ENCODE measurements at regions of chr5 and their contacts with region 1.

Region 1: GRCh38 chr5:32709781-32710549 is 1.2 kb upstream of the NPR3 start:
- DNase-seq: peak in 9 of 10 donors; percentile 47 to 93 (median 60)

Region 2: GRCh38 chr5:32436553-32437242 is 273.3 kb before region 1 on chr5:
- intact Hi-C with region 1: no loop called
- DNase-seq: no peak

Region 3: DNA sequence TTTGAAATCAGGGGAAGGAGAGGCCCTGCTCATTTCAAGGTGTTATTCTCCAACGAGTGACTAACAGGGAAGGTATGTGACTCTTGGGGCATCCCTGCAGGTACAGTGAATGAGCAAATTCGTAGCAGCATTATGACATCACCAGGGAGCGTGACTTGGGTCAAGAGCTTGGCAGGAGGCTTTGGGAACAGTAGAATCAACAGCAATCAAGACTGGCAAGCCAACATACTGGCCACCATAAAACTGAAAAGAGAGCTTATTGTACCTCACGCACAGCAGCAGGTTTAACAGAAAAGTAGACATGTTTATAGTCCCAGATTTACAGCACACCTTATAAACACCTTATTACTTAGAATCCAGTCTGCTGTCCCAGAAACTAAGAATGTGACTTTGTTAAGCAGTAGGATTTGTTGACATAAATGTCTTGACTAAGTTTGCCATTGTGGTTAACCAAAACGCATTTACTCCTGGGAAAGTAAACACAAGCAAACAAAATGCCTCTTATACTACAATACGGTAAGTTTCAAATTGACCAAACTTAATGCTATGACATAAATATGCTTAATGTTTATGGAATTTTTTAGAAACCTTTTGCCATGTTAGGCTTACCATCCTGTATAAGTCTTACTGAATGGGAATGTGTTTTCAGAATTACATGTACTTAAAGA is 298.9 kb after region 1 on chr5:
- intact Hi-C with region 1: no loop called
- DNase-seq: no peak

Region 4: DNA sequence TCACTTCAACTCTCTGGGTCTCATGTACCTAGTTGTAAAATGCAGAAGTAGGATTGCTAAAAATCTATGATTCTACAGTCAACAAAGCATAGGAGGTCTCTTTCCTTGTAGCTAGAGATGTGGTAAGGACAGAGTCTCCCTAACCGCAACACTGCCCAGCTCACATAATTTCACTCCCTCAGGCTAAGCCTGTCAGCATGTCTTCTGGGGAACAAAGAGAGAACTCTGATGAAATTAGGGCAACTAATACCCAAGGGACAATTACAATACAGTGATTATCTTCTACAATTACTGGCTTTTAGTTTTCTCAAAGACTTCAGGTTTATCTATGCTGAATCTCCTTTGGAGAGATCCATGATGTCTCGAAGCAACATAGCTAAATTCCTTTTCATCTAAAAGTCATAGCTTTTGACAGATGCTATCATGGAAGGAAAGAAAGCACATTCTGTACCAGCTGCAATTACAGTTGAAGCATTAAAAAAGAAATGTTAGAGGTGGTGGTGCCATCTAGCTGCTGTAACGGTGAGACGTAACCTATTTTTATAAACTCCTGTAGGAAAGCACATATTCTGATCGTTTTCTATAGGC is 589.8 kb after region 1 on chr5:
- intact Hi-C with region 1: loop called (anchors 5 kb)
- DNase-seq: peak in 1 of 10 donors; percentile 5

Region 5: GRCh38 chr5:33423018-33423630 is 713.2 kb after region 1 on chr5:
- intact Hi-C with region 1: loop called (anchors 5 kb)
- DNase-seq: no peak

Measured in posterior cingulate gyrus (tissue), 11 donors.